ENCODE measurements at regions of chr2 and their contacts with region 1.

Region 1: DNA sequence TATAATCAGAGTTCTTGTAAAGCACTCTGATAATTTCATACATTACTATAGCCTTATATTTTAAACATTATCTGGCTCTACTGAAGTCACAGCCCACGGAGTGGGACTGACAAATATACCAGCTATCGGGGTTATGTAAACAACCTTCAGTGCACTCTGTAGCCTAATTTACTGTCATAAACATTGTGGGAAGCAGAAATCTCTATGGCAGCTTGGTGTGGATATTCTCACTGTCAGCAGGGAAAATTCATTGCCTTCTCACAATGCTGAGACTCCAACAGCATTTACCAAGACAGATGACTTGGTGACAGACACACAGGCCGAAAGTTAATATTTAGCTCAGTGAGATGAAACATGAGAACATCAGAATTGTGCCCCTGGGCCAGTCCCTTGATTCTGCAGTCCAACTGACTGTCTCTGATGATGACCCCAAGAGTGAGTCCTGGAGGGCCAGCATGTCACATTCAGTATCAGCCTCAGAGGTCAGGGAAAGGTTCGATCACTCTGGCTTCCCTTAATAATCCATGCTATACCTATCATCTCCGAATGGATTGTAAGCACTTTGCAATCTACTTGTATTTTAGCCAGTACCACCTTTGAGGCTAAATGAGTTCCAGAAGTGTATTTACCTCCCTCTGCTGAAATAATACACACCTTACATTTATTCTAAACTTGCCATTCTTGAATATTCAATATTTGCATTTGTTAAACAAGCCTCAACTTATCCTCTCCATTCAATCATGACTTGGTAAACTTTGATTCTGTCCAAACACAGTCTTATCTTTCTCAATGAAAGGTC is 146.2 kb upstream of the OSR1 start:
- DNase-seq: peak; percentile 50 to 56
- H3K4me3 ChIP-seq: no peak overlapping the region
- H3K4me3 Mint-ChIP-seq: peak overlapping the region; percentile 1
- H3K27ac Mint-ChIP-seq: peak overlapping the region; percentile 21
- H3K4me1 ChIP-seq: peaks cover 28% of the 10 kb centered on the region
- H3K4me1 Mint-ChIP-seq: peaks cover 30% of the 10 kb centered on the region
- H3K27me3 ChIP-seq: no peaks in the 10 kb centered on the region
- H3K27me3 Mint-ChIP-seq: no peaks in the 10 kb centered on the region
- CTCF ChIP-seq: no peak

Region 2: GRCh38 chr2:19321946-19322345 is 182.7 kb before region 1 on chr2:
- CTCF ChIA-PET with region 1: no interaction called
- POLR2A ChIA-PET with region 1: no interaction called
- intact Hi-C with region 1: no loop called
- DNase-seq: no peak
- H3K4me3 ChIP-seq: no peak overlapping the region
- H3K4me3 Mint-ChIP-seq: no peak overlapping the region
- H3K27ac Mint-ChIP-seq: no peak overlapping the region
- H3K4me1 ChIP-seq: no peaks in the 10 kb centered on the region
- H3K4me1 Mint-ChIP-seq: no peaks in the 10 kb centered on the region
- H3K27me3 ChIP-seq: no peaks in the 10 kb centered on the region
- H3K27me3 Mint-ChIP-seq: no peaks in the 10 kb centered on the region
- CTCF ChIP-seq: no peak

Region 3: DNA sequence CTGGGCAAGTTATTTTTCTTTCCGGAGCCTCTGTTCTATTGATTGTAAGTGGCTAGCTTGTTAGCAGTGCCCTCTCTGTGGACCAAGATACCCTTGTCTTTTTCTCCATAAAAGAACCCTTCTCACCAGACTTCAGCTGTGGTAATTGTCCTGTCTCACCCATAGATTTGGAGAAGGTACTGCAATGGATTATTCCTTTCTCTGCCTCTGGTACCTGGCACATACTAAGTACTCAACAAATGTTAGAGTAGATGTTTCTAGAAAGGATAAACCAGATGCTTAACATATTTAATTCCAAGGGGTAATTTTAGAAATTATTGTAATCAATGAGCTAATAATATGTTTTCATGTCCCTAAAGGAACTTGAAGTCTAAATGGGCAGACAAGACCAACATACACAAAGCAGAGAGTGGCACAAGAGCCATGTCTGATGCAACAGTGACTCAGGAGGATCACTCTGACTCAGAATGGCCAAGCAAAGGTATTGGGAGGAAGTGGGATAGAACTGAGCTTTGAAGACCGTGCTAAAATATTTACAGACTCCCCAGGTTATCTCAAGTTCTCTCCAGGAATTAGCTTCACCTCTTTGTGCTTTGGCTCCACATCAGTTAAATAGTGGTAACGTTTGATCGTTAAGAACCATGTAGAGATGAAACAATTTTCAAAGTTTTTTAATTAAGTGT is 16.4 kb before region 1 on chr2:
- CTCF ChIA-PET with region 1: no interaction called
- POLR2A ChIA-PET with region 1: no interaction called
- intact Hi-C with region 1: loop called (anchors 2 kb)
- DNase-seq: peak in 1 of 2 experiments; percentile 12
- H3K4me3 ChIP-seq: no peak overlapping the region
- H3K4me3 Mint-ChIP-seq: no peak overlapping the region
- H3K27ac Mint-ChIP-seq: no peak overlapping the region
- H3K4me1 ChIP-seq: peaks cover 4% of the 10 kb centered on the region; the same call in 1 of the 2 replicates
- H3K4me1 Mint-ChIP-seq: no peaks in the 10 kb centered on the region
- H3K27me3 ChIP-seq: no peaks in the 10 kb centered on the region
- H3K27me3 Mint-ChIP-seq: no peaks in the 10 kb centered on the region
- CTCF ChIP-seq: no peak

Region 4: DNA sequence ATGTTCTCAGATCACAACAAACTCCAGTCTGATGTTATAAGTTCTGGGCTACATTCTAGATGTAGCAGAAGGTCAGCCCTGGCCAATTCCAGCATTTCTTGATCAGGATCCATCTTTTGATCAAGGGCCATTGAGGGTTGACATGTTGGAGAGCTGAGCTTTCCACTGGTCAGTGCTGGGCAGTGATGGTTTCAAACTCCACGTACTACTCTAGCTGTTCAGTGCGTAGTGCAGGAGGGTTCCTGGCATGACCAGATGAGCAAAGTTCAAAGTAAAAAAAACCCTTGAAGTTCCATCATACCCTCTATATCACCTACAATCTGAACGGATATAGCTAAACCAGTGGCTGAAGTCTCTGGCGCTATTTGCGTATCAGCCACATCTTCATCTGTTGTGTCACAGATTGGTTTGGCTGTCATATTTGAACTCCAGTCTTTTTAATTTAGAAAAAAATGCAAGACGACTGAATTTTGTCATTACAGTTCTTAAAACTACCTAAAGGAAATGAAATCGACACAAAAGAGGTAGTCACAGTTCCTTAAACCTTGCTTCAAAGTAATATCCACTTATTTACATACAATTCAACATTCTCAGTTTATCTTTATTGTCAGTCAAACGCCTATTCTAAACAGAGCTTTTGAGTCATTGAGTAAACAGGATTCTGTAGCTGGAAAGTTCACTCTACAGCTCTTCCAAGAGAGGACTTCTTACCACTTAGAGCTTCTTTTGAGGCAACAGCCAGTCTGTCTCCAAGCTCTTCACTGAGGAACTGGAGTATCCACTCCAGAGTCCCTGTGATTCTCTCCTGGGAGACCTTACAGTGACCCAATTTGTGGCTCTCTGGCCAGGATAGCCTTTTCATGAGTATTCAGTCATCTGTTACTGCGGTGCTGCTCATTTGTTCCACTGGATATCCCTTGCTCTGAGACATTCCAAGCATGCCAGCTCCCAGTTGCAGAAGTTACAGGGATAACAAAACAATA is 64.5 kb after region 1 on chr2:
- CTCF ChIA-PET with region 1: no interaction called
- POLR2A ChIA-PET with region 1: no interaction called
- intact Hi-C with region 1: loop called (anchors 2 kb)
- DNase-seq: no peak
- H3K4me3 ChIP-seq: no peak overlapping the region
- H3K4me3 Mint-ChIP-seq: no peak overlapping the region
- H3K27ac Mint-ChIP-seq: no peak overlapping the region
- H3K4me1 ChIP-seq: peaks cover 16% of the 10 kb centered on the region
- H3K4me1 Mint-ChIP-seq: peaks cover 6% of the 10 kb centered on the region
- H3K27me3 ChIP-seq: no peaks in the 10 kb centered on the region
- H3K27me3 Mint-ChIP-seq: peaks cover 6% of the 10 kb centered on the region
- CTCF ChIP-seq: no peak